Panc1 (cell line): ENCODE measurements at regions of chr15 and their contacts with region 1.

Region 1: GRCh38 chr15:60115579-60116380 is 111.7 kb downstream of the FOXB1 start:
- DNase-seq: no peak
- ATAC-seq: peak; percentile 69
- H3K4me3 ChIP-seq: no peak overlapping the region
- H3K27ac ChIP-seq: peak overlapping the region; percentile 25; the same call in 1 of the 2 replicates
- H3K4me1 ChIP-seq: peaks cover 9% of the 10 kb centered on the region; the same call in 1 of the 2 replicates
- H3K27me3 ChIP-seq: no peaks in the 10 kb centered on the region
- CTCF ChIP-seq: no peak

Region 2: GRCh38 chr15:59862191-59863155 is 253.3 kb before region 1 on chr15:
- CTCF ChIA-PET with region 1: no interaction called
- POLR2A ChIA-PET with region 1: no interaction called
- in situ Hi-C with region 1: no loop called
- intact Hi-C with region 1: no loop called
- DNase-seq: no peak
- ATAC-seq: peak; percentile 53; the same call in 1 of the 2 replicates
- H3K4me3 ChIP-seq: no peak overlapping the region
- H3K27ac ChIP-seq: no peak overlapping the region
- H3K4me1 ChIP-seq: no peaks in the 10 kb centered on the region
- H3K27me3 ChIP-seq: no peaks in the 10 kb centered on the region; the same call in 1 of the 2 replicates
- CTCF ChIP-seq: no peak

Region 3: GRCh38 chr15:60006203-60006862 is 109.4 kb before region 1 on chr15:
- CTCF ChIA-PET with region 1: no interaction called
- POLR2A ChIA-PET with region 1: no interaction called
- in situ Hi-C with region 1: no loop called
- intact Hi-C with region 1: loop called (anchors 10 kb)
- DNase-seq: peak; percentile 10
- ATAC-seq: peak; percentile 72
- H3K4me3 ChIP-seq: peak overlapping the region; percentile 51 to 78
- H3K27ac ChIP-seq: no peak overlapping the region
- H3K4me1 ChIP-seq: peaks cover 10% of the 10 kb centered on the region; the same call in 1 of the 2 replicates
- H3K27me3 ChIP-seq: peaks cover 55% of the 10 kb centered on the region
- CTCF ChIP-seq: no peak